Panc1 (cell line): ENCODE measurements at regions of chr18 and their contacts with region 1.

Region 1: DNA sequence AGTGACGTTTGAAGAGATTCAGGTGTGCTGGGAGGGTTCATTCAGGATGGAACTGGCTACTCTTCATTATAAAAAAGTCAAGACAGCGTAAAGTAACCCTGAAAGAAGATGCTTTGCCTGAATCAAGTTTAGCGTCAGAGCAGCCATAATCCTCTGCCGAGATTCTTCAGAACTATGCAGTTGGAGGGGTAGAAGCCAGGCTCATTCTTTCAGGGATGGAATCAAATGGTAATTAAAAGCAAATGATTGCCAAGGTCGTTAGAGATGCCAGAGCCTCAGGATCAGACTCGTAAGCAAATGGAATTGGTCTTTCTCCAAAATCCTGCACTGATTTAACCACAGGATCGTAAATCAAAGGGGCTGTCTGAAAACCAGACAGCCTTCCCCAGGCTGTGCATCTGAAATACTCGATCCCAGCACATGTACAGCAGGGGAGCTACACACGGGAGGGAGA is 21.9 kb downstream of the APCDD1 start:
- DNase-seq: no peak
- ATAC-seq: no peak
- H3K4me3 ChIP-seq: no peak overlapping the region
- H3K27ac ChIP-seq: no peak overlapping the region
- H3K4me1 ChIP-seq: no peaks in the 10 kb centered on the region
- H3K27me3 ChIP-seq: peaks cover 23% of the 10 kb centered on the region
- CTCF ChIP-seq: no peak

Region 2: GRCh38 chr18:10410472-10411308 is 65.7 kb before region 1 on chr18:
- CTCF ChIA-PET with region 1: no interaction called
- POLR2A ChIA-PET with region 1: no interaction called
- in situ Hi-C with region 1: no loop called
- intact Hi-C with region 1: loop called (anchors 10 kb)
- DNase-seq: no peak
- ATAC-seq: no peak
- H3K4me3 ChIP-seq: no peak overlapping the region
- H3K27ac ChIP-seq: no peak overlapping the region
- H3K4me1 ChIP-seq: no peaks in the 10 kb centered on the region
- H3K27me3 ChIP-seq: no peaks in the 10 kb centered on the region; the same call in 1 of the 2 replicates
- CTCF ChIP-seq: no peak